Esophagus muscularis mucosa (tissue), 4 donors: ENCODE measurements at regions of chr1 and their contacts with region 1.

Region 1: GRCh38 chr1:222171005-222171404 is 376.9 kb downstream of the HHIPL2 start:
- DNase-seq: no peak
- H3K4me3 ChIP-seq: no peak overlapping the region
- H3K27ac ChIP-seq: no peak overlapping the region
- H3K4me1 ChIP-seq: no peaks in the 10 kb centered on the region
- H3K27me3 ChIP-seq: no peaks in the 10 kb centered on the region
- CTCF ChIP-seq: peak; percentile 36 to 49 (median 41)
- EP300 ChIP-seq: no peak
- POLR2A ChIP-seq: no peak

Region 2: GRCh38 chr1:221478050-221478949 is 692.7 kb before region 1 on chr1:
- intact Hi-C with region 1: loop called (anchors 5 kb)
- DNase-seq: no peak
- H3K4me3 ChIP-seq: no peak overlapping the region
- H3K27ac ChIP-seq: no peak overlapping the region
- H3K4me1 ChIP-seq: peaks cover 0 to 8% (median 5%) of the 10 kb centered on the region in 4 donors
- H3K27me3 ChIP-seq: no peaks in the 10 kb centered on the region
- CTCF ChIP-seq: peak; percentile 66 to 78 (median 73)
- EP300 ChIP-seq: no peak
- POLR2A ChIP-seq: no peak

Region 3: GRCh38 chr1:221543529-221544120 is 627.4 kb before region 1 on chr1:
- intact Hi-C with region 1: loop called (anchors 10 kb)
- DNase-seq: no peak
- H3K4me3 ChIP-seq: no peak overlapping the region
- H3K27ac ChIP-seq: no peak overlapping the region
- H3K4me1 ChIP-seq: peaks cover 0 to 18% (median 13%) of the 10 kb centered on the region in 4 donors
- H3K27me3 ChIP-seq: no peaks in the 10 kb centered on the region
- CTCF ChIP-seq: peak; percentile 50 to 65 (median 58)
- EP300 ChIP-seq: no peak
- POLR2A ChIP-seq: no peak